ENCODE measurements at regions of chr6 and their contacts with region 1.

Region 1: DNA sequence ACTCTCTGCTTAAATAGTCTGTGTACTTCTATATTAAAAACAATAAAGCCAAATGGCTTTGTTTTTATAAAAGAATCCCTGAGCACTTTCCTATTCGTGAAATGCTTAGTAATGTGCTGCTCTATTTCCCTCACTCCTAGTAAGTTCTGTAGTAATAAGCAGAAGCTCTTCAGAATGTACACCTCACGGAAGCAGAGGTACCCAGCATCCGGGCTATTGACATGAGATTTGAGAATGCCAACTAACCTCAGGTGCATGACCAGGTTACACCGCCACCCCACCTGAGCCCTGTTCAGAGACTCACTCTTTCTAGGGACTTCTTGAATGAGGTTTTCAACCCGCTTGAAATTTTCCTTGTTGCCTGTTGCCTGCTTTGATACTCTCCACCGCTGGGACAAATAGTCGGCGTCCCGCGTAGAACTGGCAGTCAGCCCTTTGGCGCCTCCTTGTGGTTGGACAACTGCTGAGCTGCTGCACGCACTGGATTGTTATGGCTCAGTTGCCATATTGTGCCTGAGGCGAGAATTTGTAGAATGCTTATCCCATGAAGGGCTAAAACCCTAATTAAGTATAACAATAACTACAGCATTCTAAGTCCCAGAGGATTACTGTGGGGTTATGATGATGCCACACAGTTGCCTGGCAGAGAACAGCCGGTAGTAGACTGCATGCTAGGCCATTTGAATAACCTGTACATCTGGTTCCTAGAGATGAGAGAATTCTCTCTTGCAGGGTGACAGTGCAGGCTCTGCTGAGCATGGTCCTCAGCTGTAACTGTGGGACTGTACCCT is 95.4 kb downstream of the KHDC1L start:
- DNase-seq: peak; percentile 94
- H3K4me3 Mint-ChIP-seq: peak overlapping the region; percentile 36
- H3K27ac Mint-ChIP-seq: no peak overlapping the region
- H3K4me1 Mint-ChIP-seq: peaks cover 4% of the 10 kb centered on the region
- H3K27me3 Mint-ChIP-seq: no peaks in the 10 kb centered on the region

Region 2: DNA sequence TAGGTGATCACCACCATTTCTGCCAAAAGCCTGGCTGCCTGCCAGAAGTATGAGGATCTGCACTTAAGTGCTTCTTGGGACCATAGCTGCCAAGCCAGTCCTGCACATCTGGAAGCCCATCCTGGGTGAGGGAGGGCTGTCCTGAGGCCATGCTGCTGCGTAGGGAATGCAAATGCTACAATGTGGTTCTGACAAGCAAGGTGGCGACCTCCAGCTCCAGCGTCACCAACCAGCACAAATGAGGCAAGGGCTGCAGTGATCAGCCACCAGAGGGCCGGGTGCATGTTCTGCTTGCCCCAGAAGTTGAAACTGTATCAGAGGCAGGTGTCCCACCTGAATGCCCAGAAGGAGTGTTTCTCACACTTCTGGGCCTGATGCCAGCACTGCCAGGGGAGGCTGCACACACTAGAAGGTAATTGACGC is 607.1 kb before region 1 on chr6:
- CTCF ChIA-PET with region 1: interaction called, 4 read pairs
- intact Hi-C with region 1: loop called (anchors 2 kb)
- DNase-seq: peak; percentile 42
- H3K4me3 Mint-ChIP-seq: no peak overlapping the region
- H3K27ac Mint-ChIP-seq: no peak overlapping the region
- H3K4me1 Mint-ChIP-seq: peaks cover 3% of the 10 kb centered on the region
- H3K27me3 Mint-ChIP-seq: no peaks in the 10 kb centered on the region

Region 3: DNA sequence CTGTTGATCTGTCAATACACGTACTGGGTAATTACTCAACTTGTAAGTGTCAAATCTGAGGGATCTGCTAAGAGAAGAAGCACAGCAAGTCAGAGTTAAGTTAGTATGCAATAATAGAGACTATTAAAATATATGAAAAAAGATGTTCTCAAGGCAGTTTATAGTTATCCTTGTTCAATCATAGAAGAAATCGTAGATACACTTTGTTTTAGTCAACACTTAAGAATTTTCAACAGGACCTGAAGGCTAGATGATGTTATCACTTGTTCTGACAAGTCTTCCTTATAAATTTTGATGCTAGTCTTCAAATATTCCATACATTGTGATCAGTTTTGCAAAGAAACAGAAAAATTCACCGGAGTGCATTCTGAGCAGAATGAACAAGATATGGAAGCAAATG is 599.1 kb before region 1 on chr6:
- CTCF ChIA-PET with region 1: no interaction called
- intact Hi-C with region 1: loop called (anchors 1 kb)
- DNase-seq: no peak
- H3K4me3 Mint-ChIP-seq: no peak overlapping the region
- H3K27ac Mint-ChIP-seq: no peak overlapping the region
- H3K4me1 Mint-ChIP-seq: no peaks in the 10 kb centered on the region
- H3K27me3 Mint-ChIP-seq: no peaks in the 10 kb centered on the region

Region 4: GRCh38 chr6:72616406-72617015 is 513.3 kb before region 1 on chr6:
- CTCF ChIA-PET with region 1: interaction called, 138 read pairs
- intact Hi-C with region 1: loop called (anchors 1 kb)
- DNase-seq: no peak
- H3K4me3 Mint-ChIP-seq: no peak overlapping the region
- H3K27ac Mint-ChIP-seq: no peak overlapping the region
- H3K4me1 Mint-ChIP-seq: peaks cover 52% of the 10 kb centered on the region
- H3K27me3 Mint-ChIP-seq: no peaks in the 10 kb centered on the region

Region 5: DNA sequence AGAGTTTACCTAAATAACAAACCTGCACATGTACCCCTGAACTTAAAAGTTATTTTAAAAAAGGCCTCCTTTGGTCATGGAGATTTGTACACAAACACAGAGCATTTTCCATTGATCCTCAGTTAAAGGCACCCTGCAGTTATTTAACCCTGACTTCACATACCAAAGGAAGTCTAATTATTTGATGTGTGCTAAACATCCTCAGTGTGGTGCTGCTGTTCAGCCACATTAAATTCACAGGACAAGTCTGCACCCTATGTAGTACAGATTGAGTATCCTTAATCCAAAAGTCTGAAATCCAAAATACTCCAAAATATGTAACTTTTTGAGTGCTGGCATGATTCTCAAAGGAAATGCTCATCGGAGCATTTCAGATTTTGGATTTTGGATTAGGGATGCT is 486.6 kb before region 1 on chr6:
- CTCF ChIA-PET with region 1: interaction called, 5 read pairs
- intact Hi-C with region 1: loop called (anchors 1 kb)
- DNase-seq: no peak
- H3K4me3 Mint-ChIP-seq: no peak overlapping the region
- H3K27ac Mint-ChIP-seq: no peak overlapping the region
- H3K4me1 Mint-ChIP-seq: peaks cover 19% of the 10 kb centered on the region
- H3K27me3 Mint-ChIP-seq: no peaks in the 10 kb centered on the region

Region 6: DNA sequence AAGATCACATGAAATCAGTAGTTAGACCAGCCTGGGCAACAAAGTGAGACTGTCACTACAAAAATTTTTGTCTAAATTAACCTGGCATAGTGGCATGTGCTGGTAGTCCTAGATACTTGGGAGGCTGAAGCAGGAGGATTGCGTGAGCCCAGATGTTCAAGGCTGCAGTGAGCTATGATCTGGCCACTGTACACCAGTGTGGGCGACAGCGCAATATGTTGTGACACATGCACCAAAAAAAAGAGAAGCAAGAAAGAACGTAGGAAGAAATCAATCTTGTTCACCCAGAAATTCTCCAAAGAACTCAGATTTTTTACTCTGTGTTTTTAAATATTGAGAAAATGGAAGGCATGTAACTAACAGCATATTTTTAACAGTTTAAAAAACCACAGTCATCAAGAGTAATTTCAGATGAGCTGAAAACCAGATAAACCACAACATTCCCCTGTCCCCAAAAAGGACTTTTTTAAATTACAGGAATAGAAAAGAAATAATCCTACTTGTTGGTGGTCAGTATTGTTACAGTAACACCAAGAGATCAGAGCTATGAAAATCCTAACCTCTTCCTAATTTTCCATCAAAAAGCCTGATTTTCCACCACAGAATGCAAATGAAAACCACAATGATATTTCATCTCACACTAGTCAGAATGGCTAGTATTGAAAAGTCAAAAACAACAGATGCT is 144.7 kb before region 1 on chr6:
- CTCF ChIA-PET with region 1: no interaction called
- intact Hi-C with region 1: no loop called
- DNase-seq: no peak
- H3K4me3 Mint-ChIP-seq: no peak overlapping the region
- H3K27ac Mint-ChIP-seq: no peak overlapping the region
- H3K4me1 Mint-ChIP-seq: no peaks in the 10 kb centered on the region
- H3K27me3 Mint-ChIP-seq: no peaks in the 10 kb centered on the region

Region 7: GRCh38 chr6:73180763-73181619 is 51.1 kb after region 1 on chr6:
- CTCF ChIA-PET with region 1: interaction called, 4 read pairs
- intact Hi-C with region 1: loop called (anchors 1 kb)
- DNase-seq: peak; percentile 12
- H3K4me3 Mint-ChIP-seq: no peak overlapping the region
- H3K27ac Mint-ChIP-seq: no peak overlapping the region
- H3K4me1 Mint-ChIP-seq: peaks cover 4% of the 10 kb centered on the region
- H3K27me3 Mint-ChIP-seq: no peaks in the 10 kb centered on the region